Mammary epithelial cell (primary cell): ENCODE measurements at regions of chr2 and their contacts with region 1.

Region 1: GRCh38 chr2:74037379-74037860 is 52.7 kb downstream of the TET3 start:
- DNase-seq: no peak
- H3K4me3 ChIP-seq: no peak overlapping the region
- H3K27ac ChIP-seq: no peak overlapping the region
- H3K4me1 ChIP-seq: peaks cover 4% of the 10 kb centered on the region
- H3K27me3 ChIP-seq: no peaks in the 10 kb centered on the region
- CTCF ChIP-seq: no peak

Region 2: GRCh38 chr2:74079522-74080341 is 42.3 kb after region 1 on chr2:
- CTCF ChIA-PET with region 1: no interaction called
- dilution Hi-C with region 1: no loop called
- in situ Hi-C with region 1: loop called in 1 of 2 experiments (anchors 5 kb)
- intact Hi-C with region 1: no loop called
- DNase-seq: no peak
- H3K4me3 ChIP-seq: no peak overlapping the region
- H3K27ac ChIP-seq: no peak overlapping the region
- H3K4me1 ChIP-seq: no peaks in the 10 kb centered on the region
- H3K27me3 ChIP-seq: no peaks in the 10 kb centered on the region
- CTCF ChIP-seq: no peak